Testis (tissue), 5 donors: ENCODE measurements at regions of chr7 and their contacts with region 1.

Region 1: GRCh38 chr7:48321319-48322010 is 150.2 kb downstream of the ABCA13 start:
- DNase-seq: no peak
- H3K4me3 ChIP-seq: no peak overlapping the region
- H3K27ac ChIP-seq: no peak overlapping the region
- H3K4me1 ChIP-seq: no peaks in the 10 kb centered on the region
- H3K27me3 ChIP-seq: no peaks in the 10 kb centered on the region
- CTCF ChIP-seq: no peak
- POLR2A ChIP-seq: no peak

Region 2: GRCh38 chr7:48154792-48155413 is 166.6 kb before region 1 on chr7:
- intact Hi-C with region 1: no loop called
- DNase-seq: peak; percentile 41
- H3K4me3 ChIP-seq: no peak overlapping the region
- H3K27ac ChIP-seq: no peak overlapping the region
- H3K4me1 ChIP-seq: no peaks in the 10 kb centered on the region
- H3K27me3 ChIP-seq: no peaks in the 10 kb centered on the region
- CTCF ChIP-seq: peak; percentile 13 to 33 (median 17)
- POLR2A ChIP-seq: no peak

Region 3: GRCh38 chr7:48360574-48360973 is 39.1 kb after region 1 on chr7:
- intact Hi-C with region 1: no loop called
- DNase-seq: no peak
- H3K4me3 ChIP-seq: no peak overlapping the region
- H3K27ac ChIP-seq: no peak overlapping the region
- H3K4me1 ChIP-seq: no peaks in the 10 kb centered on the region
- H3K27me3 ChIP-seq: no peaks in the 10 kb centered on the region
- CTCF ChIP-seq: no peak
- POLR2A ChIP-seq: no peak

Region 4: DNA sequence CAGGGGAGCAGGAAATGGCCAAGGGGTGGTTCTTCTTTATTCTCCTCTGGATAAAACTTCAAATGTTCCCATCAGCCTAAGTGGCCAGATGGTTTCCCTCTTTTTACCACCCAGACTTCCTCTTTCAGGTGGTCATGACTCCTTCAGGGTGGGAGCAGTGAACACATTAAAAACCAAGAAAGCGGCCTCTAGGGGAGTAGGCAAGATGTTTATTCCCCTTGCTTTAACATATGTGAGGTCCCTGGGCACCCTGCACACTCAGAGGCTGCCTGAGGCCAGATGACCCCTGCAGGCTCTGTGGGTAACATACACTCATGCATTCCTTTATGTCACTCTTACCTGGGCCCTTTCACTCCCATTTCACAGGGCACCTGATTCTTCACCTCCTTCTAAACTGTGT is 207.2 kb after region 1 on chr7:
- intact Hi-C with region 1: no loop called
- DNase-seq: no peak
- H3K4me3 ChIP-seq: no peak overlapping the region
- H3K27ac ChIP-seq: no peak overlapping the region
- H3K4me1 ChIP-seq: no peaks in the 10 kb centered on the region
- H3K27me3 ChIP-seq: no peaks in the 10 kb centered on the region
- CTCF ChIP-seq: no peak
- POLR2A ChIP-seq: no peak

Region 5: GRCh38 chr7:48875045-48875916 is 553.8 kb after region 1 on chr7:
- intact Hi-C with region 1: loop called (anchors 10 kb)
- DNase-seq: peak; percentile 82
- H3K4me3 ChIP-seq: no peak overlapping the region
- H3K27ac ChIP-seq: no peak overlapping the region
- H3K4me1 ChIP-seq: no peaks in the 10 kb centered on the region
- H3K27me3 ChIP-seq: no peaks in the 10 kb centered on the region
- CTCF ChIP-seq: peak in 2 of 3 experiments; percentile 34 to 44
- POLR2A ChIP-seq: no peak